Posterior cingulate gyrus (tissue), 11 donors: ENCODE measurements at regions of chr5 and their contacts with region 1.

Region 1: DNA sequence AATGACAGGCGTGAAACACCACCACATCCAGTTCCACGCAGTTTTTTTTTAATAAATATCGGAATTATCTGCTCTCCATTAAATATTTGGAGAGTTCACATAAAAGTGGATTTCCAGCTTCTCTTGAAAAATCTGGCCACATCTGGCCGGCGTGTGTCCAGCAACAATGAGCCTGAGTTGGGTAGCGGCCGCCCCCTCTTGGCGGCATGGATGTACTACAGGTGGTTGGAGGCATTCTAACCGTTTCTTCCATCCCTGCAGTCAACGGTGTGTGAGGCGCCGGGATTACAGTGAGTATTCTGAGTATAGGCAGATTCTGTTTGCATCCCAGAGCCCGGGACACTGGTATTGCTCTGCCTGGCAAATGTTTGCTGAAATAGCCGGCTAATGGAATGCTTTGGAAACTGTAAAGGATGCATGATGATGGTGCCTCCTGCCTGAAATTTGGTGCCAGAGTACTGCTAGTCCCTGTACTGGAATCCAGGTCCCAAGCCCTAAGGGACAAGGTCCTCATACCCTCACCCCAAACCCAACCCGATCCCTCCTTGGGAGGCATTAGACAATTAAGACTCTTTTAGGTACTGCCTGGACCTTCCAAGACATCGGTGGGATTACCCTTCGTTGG is 13.6 kb upstream of the GM2A start:
- DNase-seq: peak in 9 of 10 donors; percentile 19 to 95 (median 67)

Region 2: GRCh38 chr5:151126199-151126645 is 113.1 kb before region 1 on chr5:
- intact Hi-C with region 1: loop called (anchors 5 kb)
- DNase-seq: peak in 9 of 10 donors; percentile 60 to 96 (median 76)